ENCODE measurements at regions of chr1 and their contacts with region 1.

Region 1: DNA sequence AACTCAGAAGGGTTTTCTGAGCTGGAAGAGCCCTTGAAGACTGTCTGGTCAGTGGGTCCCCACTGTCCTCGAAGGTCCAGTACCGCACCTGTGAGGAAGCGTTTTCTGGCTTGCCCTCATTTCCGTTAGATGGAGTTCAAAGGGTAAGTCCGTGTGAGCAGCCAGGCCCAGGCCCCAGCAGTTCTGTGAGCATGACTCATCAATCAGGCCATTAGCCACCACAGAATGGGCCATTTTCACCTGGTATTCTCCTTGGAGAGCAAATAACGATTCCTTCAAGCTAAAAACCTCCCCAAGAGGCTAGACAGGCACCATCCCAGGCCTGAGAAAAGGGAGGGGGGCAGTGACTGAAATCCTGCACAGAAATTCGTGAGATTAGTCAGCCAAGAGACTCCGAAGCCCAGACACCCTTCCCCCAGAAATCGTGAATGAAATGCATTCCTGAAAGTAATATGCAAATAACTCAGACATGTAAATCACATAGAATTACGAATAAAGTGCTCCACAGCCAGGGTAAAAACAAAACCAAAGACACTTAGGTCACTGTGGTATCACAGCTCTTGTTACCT is 66.0 kb downstream of the BCAR3 start:
- DNase-seq: peak; percentile 87
- H3K4me3 Mint-ChIP-seq: peak overlapping the region; percentile 45
- H3K27ac Mint-ChIP-seq: peak overlapping the region; percentile 84
- H3K4me1 Mint-ChIP-seq: peaks cover 26% of the 10 kb centered on the region
- H3K27me3 Mint-ChIP-seq: peaks cover 6% of the 10 kb centered on the region

Region 2: GRCh38 chr1:93395195-93395594 is 220.5 kb before region 1 on chr1:
- CTCF ChIA-PET with region 1: no interaction called
- POLR2A ChIA-PET with region 1: no interaction called
- intact Hi-C with region 1: no loop called
- DNase-seq: no peak
- H3K4me3 Mint-ChIP-seq: no peak overlapping the region
- H3K27ac Mint-ChIP-seq: no peak overlapping the region
- H3K4me1 Mint-ChIP-seq: no peaks in the 10 kb centered on the region
- H3K27me3 Mint-ChIP-seq: no peaks in the 10 kb centered on the region

Region 3: GRCh38 chr1:93437976-93438605 is 177.6 kb before region 1 on chr1:
- CTCF ChIA-PET with region 1: interaction called, 10 read pairs
- POLR2A ChIA-PET with region 1: no interaction called
- intact Hi-C with region 1: loop called (anchors 2 kb)
- DNase-seq: no peak
- H3K4me3 Mint-ChIP-seq: no peak overlapping the region
- H3K27ac Mint-ChIP-seq: no peak overlapping the region
- H3K4me1 Mint-ChIP-seq: no peaks in the 10 kb centered on the region
- H3K27me3 Mint-ChIP-seq: peaks cover 5% of the 10 kb centered on the region

Region 4: DNA sequence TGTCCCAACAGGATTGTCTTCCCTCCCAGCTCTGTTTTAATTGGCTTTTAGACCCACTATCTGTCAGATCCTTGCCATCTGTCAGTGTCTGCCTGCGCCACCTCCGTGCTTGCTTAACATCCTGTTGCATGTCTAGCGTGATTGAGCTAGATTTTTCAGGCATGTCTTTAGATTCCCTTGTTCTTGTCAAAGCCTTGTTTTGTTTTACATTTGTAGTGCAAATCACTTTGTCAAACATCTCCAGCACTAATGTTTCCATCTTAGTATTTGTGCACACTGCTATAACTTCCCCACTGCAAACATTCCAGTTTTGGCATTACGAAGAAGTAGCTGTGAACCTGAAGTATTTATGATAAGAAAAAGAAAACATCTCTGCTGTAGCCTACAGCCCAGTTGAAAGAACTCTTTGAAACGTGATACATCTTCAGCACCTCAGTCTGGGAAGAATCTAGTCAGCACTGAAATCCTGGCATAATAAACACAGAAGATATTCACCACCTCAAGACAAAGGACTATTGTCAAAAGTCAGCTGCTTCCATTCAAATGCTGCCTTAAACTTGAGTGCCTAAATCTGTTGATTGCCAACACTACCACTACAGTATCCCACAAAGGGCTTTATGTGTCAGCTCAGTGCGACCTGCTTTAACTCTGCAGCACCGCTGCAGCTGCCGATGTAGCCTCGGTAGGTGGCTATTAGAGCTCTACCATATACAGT is 62.8 kb before region 1 on chr1:
- CTCF ChIA-PET with region 1: no interaction called
- POLR2A ChIA-PET with region 1: no interaction called
- intact Hi-C with region 1: no loop called
- DNase-seq: no peak
- H3K4me3 Mint-ChIP-seq: no peak overlapping the region
- H3K27ac Mint-ChIP-seq: no peak overlapping the region
- H3K4me1 Mint-ChIP-seq: peaks cover 7% of the 10 kb centered on the region
- H3K27me3 Mint-ChIP-seq: peaks cover 4% of the 10 kb centered on the region

Region 5: GRCh38 chr1:93597709-93598108 is 18.0 kb before region 1 on chr1:
- CTCF ChIA-PET with region 1: no interaction called
- POLR2A ChIA-PET with region 1: no interaction called
- intact Hi-C with region 1: no loop called
- DNase-seq: no peak
- H3K4me3 Mint-ChIP-seq: no peak overlapping the region
- H3K27ac Mint-ChIP-seq: no peak overlapping the region
- H3K4me1 Mint-ChIP-seq: no peaks in the 10 kb centered on the region
- H3K27me3 Mint-ChIP-seq: peaks cover 2% of the 10 kb centered on the region

Region 6: GRCh38 chr1:93638981-93639380 is 23.3 kb after region 1 on chr1:
- CTCF ChIA-PET with region 1: interaction called, 3 read pairs
- POLR2A ChIA-PET with region 1: interaction called, 5 read pairs
- intact Hi-C with region 1: loop called (anchors 1 kb)
- DNase-seq: no peak
- H3K4me3 Mint-ChIP-seq: no peak overlapping the region
- H3K27ac Mint-ChIP-seq: no peak overlapping the region
- H3K4me1 Mint-ChIP-seq: peaks cover 19% of the 10 kb centered on the region
- H3K27me3 Mint-ChIP-seq: no peaks in the 10 kb centered on the region

Region 7: GRCh38 chr1:93708734-93709481 is 93.2 kb after region 1 on chr1:
- CTCF ChIA-PET with region 1: no interaction called
- POLR2A ChIA-PET with region 1: no interaction called
- intact Hi-C with region 1: loop called (anchors 2 kb)
- DNase-seq: peak; percentile 31
- H3K4me3 Mint-ChIP-seq: no peak overlapping the region
- H3K27ac Mint-ChIP-seq: no peak overlapping the region
- H3K4me1 Mint-ChIP-seq: peaks cover 40% of the 10 kb centered on the region
- H3K27me3 Mint-ChIP-seq: peaks cover 14% of the 10 kb centered on the region

Region 8: GRCh38 chr1:94322696-94323095 is 707.0 kb after region 1 on chr1:
- CTCF ChIA-PET with region 1: no interaction called
- POLR2A ChIA-PET with region 1: no interaction called
- intact Hi-C with region 1: no loop called
- DNase-seq: no peak
- H3K4me3 Mint-ChIP-seq: no peak overlapping the region
- H3K27ac Mint-ChIP-seq: no peak overlapping the region
- H3K4me1 Mint-ChIP-seq: no peaks in the 10 kb centered on the region
- H3K27me3 Mint-ChIP-seq: peaks cover 14% of the 10 kb centered on the region